Endothelial cell of umbilical vein (primary cell): ENCODE measurements at regions of chr10 and their contacts with region 1.

Region 1: DNA sequence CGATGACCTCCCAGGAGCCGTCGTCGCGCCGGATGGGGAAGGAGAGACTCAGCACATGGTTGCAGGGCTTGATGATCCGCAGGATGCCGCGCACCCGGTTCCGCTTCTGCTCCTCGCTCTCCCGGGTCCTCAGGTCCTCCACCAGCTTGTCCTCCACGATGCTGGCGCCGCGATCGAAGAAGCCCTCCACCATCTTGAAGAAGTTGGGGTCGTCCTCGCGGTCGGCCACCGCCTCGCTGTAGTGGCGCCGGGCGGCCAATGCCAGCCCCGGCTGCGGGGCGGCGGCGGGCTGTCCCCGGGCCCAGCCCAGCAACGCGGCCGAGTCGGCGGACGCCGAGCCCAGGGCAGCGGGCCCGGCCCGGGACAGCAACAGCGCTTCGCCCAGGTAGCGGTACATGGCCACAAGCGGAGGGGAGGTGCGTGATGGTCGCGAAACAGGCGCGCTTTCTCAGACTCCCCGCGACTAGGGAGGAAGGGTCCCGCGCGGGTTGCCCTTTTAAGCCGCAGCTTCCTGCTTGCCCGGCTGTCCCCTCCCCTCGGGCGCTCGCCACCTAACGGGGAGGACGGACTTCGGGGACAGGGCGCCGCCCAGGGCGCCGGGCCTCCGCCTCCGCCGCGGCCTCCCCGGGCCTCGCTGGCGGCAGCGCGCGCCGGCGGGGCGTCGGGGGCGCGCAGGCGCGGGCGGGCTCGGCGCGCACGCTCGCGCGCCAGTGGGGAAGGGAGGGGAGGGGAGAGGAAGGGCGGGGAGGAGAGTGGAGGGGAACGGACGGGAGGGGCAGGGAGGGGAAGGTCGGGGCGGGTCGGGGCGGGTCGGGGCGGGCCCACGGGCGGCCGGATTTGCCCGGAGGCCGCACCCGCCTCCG is at the starts of genes GLUD1 and SHLD2:
- DNase-seq: peak; percentile 82
- H3K4me3 ChIP-seq: peak within 1 kb of the TSS; percentile 69 to 95 (median 94)
- H3K27ac ChIP-seq: peak within 1 kb of the TSS; percentile 72
- H3K4me1 ChIP-seq: peaks cover 35% of the 10 kb centered on the region
- H3K27me3 ChIP-seq: no peaks in the 10 kb centered on the region
- CTCF ChIP-seq: no peak
- POLR2A ChIP-seq: peak; percentile 79
- total RNA-seq, gene GLUD1: 86.6 and 94.7 TPM in 2 replicates
- total RNA-seq, gene SHLD2: 19.2 and 22.4 TPM in 2 replicates

Region 2: DNA sequence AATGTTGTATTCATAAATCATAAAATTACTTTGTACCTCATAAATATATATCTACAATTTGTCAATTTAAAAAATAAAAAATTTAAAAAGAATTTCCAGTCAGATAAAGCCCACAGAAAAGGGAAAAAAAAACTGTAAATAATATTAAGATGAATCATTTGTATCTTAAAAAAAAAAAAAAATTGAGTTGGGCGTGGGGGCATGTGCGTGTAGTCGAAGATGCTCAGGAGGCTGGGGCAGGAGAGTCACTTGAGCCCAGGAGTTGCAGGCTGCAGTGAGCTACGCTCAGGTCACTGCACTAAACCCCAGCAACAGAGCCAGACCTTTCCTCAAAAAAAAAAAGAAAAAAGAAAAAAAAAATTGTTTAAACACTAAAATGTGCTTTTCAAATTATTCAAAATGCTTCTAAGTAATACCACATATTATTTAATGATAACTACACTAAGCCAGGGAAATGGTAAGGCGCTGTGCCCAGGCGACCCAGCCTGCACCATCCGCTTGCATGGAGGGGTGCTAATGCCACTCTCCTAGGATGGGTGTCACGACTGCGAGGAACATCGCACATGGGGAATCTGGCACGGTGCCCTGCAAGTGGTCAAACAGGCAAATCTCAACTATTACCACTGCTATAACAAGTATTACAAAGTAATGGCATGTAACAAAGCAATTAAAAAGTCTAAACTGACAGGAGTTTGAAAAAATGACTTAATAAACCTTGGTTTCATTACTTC is 15.3 kb before region 1 on chr10:
- CTCF ChIA-PET with region 1: interaction called, 9 read pairs
- POLR2A ChIA-PET with region 1: no interaction called
- dilution Hi-C with region 1: no loop called
- intact Hi-C with region 1: loop called (anchors 1 kb)
- DNase-seq: no peak
- H3K4me3 ChIP-seq: no peak overlapping the region
- H3K27ac ChIP-seq: no peak overlapping the region
- H3K4me1 ChIP-seq: peaks cover 23% of the 10 kb centered on the region
- H3K27me3 ChIP-seq: no peaks in the 10 kb centered on the region
- CTCF ChIP-seq: no peak
- POLR2A ChIP-seq: no peak